Caco-2 (cell line): ENCODE measurements at regions of chr7 and their contacts with region 1.

Region 1: GRCh38 chr7:88243345-88243909 is 23.6 kb upstream of the SRI start:
- DNase-seq: peak in 1 of 2 experiments; percentile 36
- H3K4me3 ChIP-seq: no peak overlapping the region
- H3K4me3 Mint-ChIP-seq: no peak overlapping the region
- H3K27ac Mint-ChIP-seq: no peak overlapping the region
- H3K4me1 ChIP-seq: no peaks in the 10 kb centered on the region
- H3K4me1 Mint-ChIP-seq: no peaks in the 10 kb centered on the region
- H3K27me3 ChIP-seq: no peaks in the 10 kb centered on the region
- H3K27me3 Mint-ChIP-seq: peaks cover 5% of the 10 kb centered on the region
- CTCF ChIP-seq: peak; percentile 68 to 81

Region 2: GRCh38 chr7:88344956-88345832 is 101.8 kb after region 1 on chr7:
- CTCF ChIA-PET with region 1: interaction called, 14 read pairs
- POLR2A ChIA-PET with region 1: no interaction called
- intact Hi-C with region 1: no loop called
- DNase-seq: peak; percentile 57 to 68
- H3K4me3 ChIP-seq: no peak overlapping the region
- H3K4me3 Mint-ChIP-seq: no peak overlapping the region
- H3K27ac Mint-ChIP-seq: no peak overlapping the region
- H3K4me1 ChIP-seq: no peaks in the 10 kb centered on the region
- H3K4me1 Mint-ChIP-seq: no peaks in the 10 kb centered on the region
- H3K27me3 ChIP-seq: no peaks in the 10 kb centered on the region
- H3K27me3 Mint-ChIP-seq: peaks cover 4% of the 10 kb centered on the region
- CTCF ChIP-seq: peak; percentile 71 to 91

Region 3: GRCh38 chr7:88401007-88401623 is 157.7 kb after region 1 on chr7:
- CTCF ChIA-PET with region 1: no interaction called
- POLR2A ChIA-PET with region 1: no interaction called
- intact Hi-C with region 1: loop called (anchors 5 kb)
- DNase-seq: peak in 1 of 2 experiments; percentile 27
- H3K4me3 ChIP-seq: no peak overlapping the region
- H3K4me3 Mint-ChIP-seq: no peak overlapping the region
- H3K27ac Mint-ChIP-seq: no peak overlapping the region
- H3K4me1 ChIP-seq: no peaks in the 10 kb centered on the region
- H3K4me1 Mint-ChIP-seq: no peaks in the 10 kb centered on the region
- H3K27me3 ChIP-seq: no peaks in the 10 kb centered on the region
- H3K27me3 Mint-ChIP-seq: peaks cover 7% of the 10 kb centered on the region
- CTCF ChIP-seq: peak; percentile 47 to 70

Region 4: DNA sequence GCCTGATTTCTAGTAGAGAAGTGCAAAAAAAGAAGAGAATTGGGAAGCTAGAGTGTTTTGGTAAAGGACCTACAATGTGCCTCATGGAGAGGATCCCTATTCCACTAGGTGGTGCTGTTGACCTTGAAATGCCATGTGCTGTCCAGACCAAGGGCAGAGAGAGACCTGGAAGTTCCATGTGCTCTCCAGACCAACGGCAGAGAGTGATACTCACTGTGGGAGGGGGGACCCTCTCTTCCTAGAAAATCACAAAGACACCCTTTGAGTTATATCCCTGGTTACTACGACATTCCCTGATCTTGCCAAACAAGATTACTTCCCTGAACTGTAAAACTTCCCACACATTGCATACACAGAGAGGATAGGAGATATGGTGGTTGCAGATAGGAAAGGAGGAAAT is 303.4 kb after region 1 on chr7:
- CTCF ChIA-PET with region 1: no interaction called
- POLR2A ChIA-PET with region 1: no interaction called
- intact Hi-C with region 1: loop called (anchors 10 kb)
- DNase-seq: peak in 1 of 2 experiments; percentile 62
- H3K4me3 ChIP-seq: no peak overlapping the region
- H3K4me3 Mint-ChIP-seq: no peak overlapping the region
- H3K27ac Mint-ChIP-seq: no peak overlapping the region
- H3K4me1 ChIP-seq: no peaks in the 10 kb centered on the region
- H3K4me1 Mint-ChIP-seq: no peaks in the 10 kb centered on the region
- H3K27me3 ChIP-seq: no peaks in the 10 kb centered on the region
- H3K27me3 Mint-ChIP-seq: no peaks in the 10 kb centered on the region
- CTCF ChIP-seq: peak; percentile 33 to 45

Region 5: DNA sequence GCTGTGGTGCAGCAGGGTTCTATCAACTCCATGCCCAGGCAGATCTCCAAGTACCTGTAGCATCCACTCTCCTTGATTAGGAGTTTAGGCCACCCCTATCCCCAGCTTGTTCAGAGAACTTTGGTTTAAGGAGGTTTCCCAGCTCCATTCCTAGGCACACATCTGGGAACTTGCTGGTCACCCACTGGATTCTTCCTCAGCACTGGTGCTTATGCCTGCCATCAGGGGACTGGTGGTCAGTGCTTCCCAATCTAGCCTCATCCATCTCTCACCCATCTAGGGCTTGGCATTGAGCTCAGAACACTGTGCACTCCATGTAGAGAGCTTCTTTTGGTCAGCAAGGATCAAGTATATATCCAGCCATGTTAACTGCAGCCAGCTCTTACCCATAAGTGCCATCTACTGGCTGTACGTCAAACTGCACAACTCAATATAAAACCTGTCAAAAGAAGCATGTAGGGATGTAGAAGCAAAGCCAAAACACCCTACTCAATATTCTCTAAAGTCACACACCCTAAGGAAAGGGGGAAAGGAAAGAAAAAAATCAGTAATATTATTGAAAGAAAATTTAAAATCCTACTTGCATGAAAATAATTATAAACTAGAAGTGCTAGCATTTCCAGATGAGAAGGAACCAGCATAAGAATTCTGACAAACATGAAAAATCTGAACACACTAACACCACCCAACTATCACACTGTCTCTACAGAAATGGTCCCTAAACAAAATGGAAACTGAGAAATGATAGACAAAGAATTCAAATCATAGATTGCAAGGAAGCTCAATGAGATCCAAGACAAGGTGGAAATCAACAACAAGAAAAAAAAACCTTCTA is 1379.6 kb after region 1 on chr7:
- CTCF ChIA-PET with region 1: interaction called, 6 read pairs
- POLR2A ChIA-PET with region 1: no interaction called
- intact Hi-C with region 1: loop called (anchors 1 kb)
- DNase-seq: peak; percentile 34 to 45
- H3K4me3 ChIP-seq: no peak overlapping the region
- H3K4me3 Mint-ChIP-seq: no peak overlapping the region
- H3K27ac Mint-ChIP-seq: no peak overlapping the region
- H3K4me1 ChIP-seq: no peaks in the 10 kb centered on the region
- H3K4me1 Mint-ChIP-seq: no peaks in the 10 kb centered on the region
- H3K27me3 ChIP-seq: no peaks in the 10 kb centered on the region
- H3K27me3 Mint-ChIP-seq: peaks cover 7% of the 10 kb centered on the region
- CTCF ChIP-seq: peak; percentile 61 to 78